Cardiac septum (tissue), 1 donor: ENCODE measurements at regions of chr14 and their contacts with region 1.

Region 1: GRCh38 chr14:50954811-50955372 is 10.6 kb upstream of the PYGL start:
- DNase-seq: no peak

Region 2: GRCh38 chr14:51094901-51095853 is 140.3 kb after region 1 on chr14 and contains the start of gene TRIM9:
- intact Hi-C with region 1: loop called (anchors 10 kb)
- DNase-seq: peak; percentile 97
- total RNA-seq, gene TRIM9: 1.5 TPM

Region 3: DNA sequence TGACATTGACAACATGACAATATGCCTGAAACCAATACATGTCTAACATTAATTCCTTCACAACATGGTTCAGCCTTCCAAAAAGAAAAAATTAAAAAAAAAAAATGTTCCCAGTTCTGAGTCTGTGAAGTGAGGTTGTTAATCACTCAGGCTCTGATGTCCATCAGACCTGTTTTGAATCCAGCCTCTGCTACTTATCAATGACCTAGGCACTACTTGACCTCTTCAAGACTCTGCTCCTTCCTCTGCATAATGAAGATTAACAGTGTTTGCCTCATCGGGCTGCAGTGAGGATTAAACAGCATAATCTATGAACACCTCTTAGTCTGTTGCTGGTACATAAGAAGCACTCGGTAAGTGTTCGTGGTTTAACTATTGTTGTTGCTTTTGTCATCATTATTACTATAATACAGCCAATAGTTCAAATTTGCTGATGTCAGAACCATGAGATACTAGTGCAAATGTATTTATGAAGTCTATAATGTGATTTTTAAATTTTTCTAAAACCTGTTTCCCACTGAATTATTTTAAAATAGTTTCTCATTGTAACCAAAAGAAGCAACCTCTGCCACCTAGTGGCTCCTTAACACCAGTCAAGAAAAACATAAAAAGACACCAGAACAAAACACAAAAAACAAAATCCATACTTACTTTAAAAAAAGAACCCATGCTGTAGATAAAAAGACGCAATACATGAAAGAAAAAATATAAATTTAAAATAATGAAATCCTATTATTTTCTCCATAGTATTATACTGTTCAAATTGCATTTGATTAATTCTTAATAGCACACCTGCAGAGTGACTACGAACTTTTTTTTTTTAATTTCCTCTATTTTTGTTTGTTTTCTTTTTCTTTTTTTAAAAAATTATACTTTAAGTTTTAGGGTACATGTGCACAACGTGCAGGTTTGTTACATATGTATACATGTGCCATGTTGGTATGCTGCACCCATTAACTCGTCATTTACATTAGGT is 264.9 kb after region 1 on chr14:
- intact Hi-C with region 1: loop called (anchors 5 kb)
- DNase-seq: no peak